HepG2 (cell line): ENCODE measurements at regions of chr17 and their contacts with region 1.

Region 1: GRCh38 chr17:59607817-59608403 is 11.8 kb upstream of the CLTC start:
- DNase-seq: peak; percentile 30
- ATAC-seq: peak; percentile 54; the same call in 2 of the 3 replicates
- H3K4me3 ChIP-seq: no peak overlapping the region
- H3K27ac ChIP-seq: no peak overlapping the region
- H3K4me1 ChIP-seq: no peaks in the 10 kb centered on the region
- H3K27me3 ChIP-seq: no peaks in the 10 kb centered on the region
- CTCF ChIP-seq: peak; percentile 54
- EP300 ChIP-seq: no peak
- POLR2A ChIP-seq: no peak
- RAD21 ChIP-seq: no peak

Region 2: DNA sequence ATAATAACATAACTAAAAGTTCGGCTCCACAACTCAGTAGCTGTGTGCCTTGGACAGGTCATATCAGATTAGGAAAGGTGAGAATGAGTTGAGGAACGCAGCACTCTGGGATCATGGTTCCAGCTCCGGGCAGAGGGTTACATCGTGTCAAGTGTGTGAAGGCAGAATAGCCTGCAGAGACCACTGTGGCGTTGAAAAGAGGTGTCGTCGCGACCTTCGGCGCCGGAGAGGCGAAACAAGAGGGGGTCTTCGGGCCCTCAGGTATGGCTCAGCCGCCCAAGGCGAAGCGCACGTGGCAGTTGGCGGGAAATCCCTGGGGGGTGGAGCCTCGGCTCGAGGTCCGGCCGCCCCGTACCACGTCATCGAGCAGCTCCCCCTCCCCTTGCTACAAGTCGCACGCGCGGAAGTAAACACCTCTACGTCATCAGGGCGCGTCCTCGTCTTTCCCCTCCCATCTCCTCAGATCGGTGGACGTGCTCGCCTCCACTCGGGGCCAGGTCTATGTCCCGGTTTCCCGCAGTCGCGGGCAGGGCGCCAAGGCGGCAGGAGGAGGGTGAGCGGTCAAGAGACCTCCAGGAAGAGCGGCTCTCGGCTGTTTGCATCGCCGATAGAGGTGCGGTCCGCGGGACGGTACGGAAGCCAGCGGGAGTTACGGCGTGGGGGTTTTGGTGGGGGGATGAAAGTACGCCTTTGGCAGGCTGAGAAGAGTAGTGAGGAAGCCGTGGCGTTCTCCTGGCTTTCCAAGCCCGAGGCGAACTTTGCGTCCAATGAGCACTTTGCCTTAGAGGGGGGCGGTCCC is 42.5 kb before region 1 on chr17 and contains the start of gene DHX40:
- CTCF ChIA-PET with region 1: no interaction called
- POLR2A ChIA-PET with region 1: no interaction called
- in situ Hi-C with region 1: no loop called
- intact Hi-C with region 1: loop called (anchors 2 kb)
- DNase-seq: peak; percentile 82
- ATAC-seq: peak; percentile 73
- H3K4me3 ChIP-seq: peak within 1 kb of the TSS; percentile 88 to 95 (median 88)
- H3K27ac ChIP-seq: peak within 1 kb of the TSS; percentile 29
- H3K4me1 ChIP-seq: peaks cover 16% of the 10 kb centered on the region
- H3K27me3 ChIP-seq: no peaks in the 10 kb centered on the region; a peak in 1 of 5 replicates
- CTCF ChIP-seq: no peak; the same call in none of the 2 replicates
- EP300 ChIP-seq: 0 out of 4 replicates have a peak, but pooled peaks of 1 of the 2 experiments have one; percentile 30
- POLR2A ChIP-seq: peak; percentile 61 to 68; a peak in 3 of 4 replicates
- RAD21 ChIP-seq: no peak
- total RNA-seq, gene DHX40: 37.0 and 62.6 TPM in 2 replicates

Region 3: GRCh38 chr17:60874772-60875171 is 1266.9 kb after region 1 on chr17:
- CTCF ChIA-PET with region 1: no interaction called
- POLR2A ChIA-PET with region 1: no interaction called
- in situ Hi-C with region 1: no loop called
- intact Hi-C with region 1: no loop called
- DNase-seq: no peak
- ATAC-seq: no peak
- H3K4me3 ChIP-seq: no peak overlapping the region
- H3K27ac ChIP-seq: no peak overlapping the region
- H3K4me1 ChIP-seq: no peaks in the 10 kb centered on the region
- H3K27me3 ChIP-seq: no peaks in the 10 kb centered on the region
- CTCF ChIP-seq: no peak
- EP300 ChIP-seq: no peak
- POLR2A ChIP-seq: no peak
- RAD21 ChIP-seq: no peak